Activated CD4-positive, alpha-beta T cell treated with anti-CD3 and anti-CD28 coated beads, Interleukin-2, amount 10 ng/mL, durations not matched to agents 24 days and 14 days (primary cell): ENCODE measurements at regions of chr2 and their contacts with region 1.

Region 1: GRCh38 chr2:12293874-12294273 is 422.9 kb upstream of the TRIB2 start:
- DNase-seq: peak; percentile 80
- H3K4me3 Mint-ChIP-seq: peak overlapping the region; percentile 34
- H3K27ac Mint-ChIP-seq: peak overlapping the region; percentile 82
- H3K4me1 Mint-ChIP-seq: peaks cover 46% of the 10 kb centered on the region
- H3K27me3 Mint-ChIP-seq: peaks cover 10% of the 10 kb centered on the region

Region 2: DNA sequence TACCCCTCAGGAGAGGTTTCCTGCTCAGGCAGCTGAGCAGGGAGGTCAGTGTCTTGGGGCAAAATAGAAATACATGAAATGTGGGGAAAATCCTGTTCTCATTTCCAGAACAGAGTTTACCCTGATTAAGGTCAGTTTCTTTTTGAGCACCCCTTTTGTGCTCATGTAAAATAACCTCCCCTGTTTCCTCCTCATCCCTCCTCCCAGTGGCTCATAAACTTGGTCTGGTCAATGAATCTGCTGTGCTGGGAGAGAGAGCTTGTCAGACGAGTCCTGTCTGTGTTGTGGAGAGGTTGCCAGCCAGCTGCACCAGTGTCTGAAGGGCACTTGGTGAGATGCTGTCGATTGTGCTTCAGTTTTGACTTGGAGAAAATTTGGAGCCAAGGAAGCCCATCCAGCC is 672.5 kb before region 1 on chr2:
- intact Hi-C with region 1: no loop called
- DNase-seq: no peak
- H3K4me3 Mint-ChIP-seq: no peak overlapping the region
- H3K27ac Mint-ChIP-seq: no peak overlapping the region
- H3K4me1 Mint-ChIP-seq: no peaks in the 10 kb centered on the region
- H3K27me3 Mint-ChIP-seq: no peaks in the 10 kb centered on the region

Region 3: DNA sequence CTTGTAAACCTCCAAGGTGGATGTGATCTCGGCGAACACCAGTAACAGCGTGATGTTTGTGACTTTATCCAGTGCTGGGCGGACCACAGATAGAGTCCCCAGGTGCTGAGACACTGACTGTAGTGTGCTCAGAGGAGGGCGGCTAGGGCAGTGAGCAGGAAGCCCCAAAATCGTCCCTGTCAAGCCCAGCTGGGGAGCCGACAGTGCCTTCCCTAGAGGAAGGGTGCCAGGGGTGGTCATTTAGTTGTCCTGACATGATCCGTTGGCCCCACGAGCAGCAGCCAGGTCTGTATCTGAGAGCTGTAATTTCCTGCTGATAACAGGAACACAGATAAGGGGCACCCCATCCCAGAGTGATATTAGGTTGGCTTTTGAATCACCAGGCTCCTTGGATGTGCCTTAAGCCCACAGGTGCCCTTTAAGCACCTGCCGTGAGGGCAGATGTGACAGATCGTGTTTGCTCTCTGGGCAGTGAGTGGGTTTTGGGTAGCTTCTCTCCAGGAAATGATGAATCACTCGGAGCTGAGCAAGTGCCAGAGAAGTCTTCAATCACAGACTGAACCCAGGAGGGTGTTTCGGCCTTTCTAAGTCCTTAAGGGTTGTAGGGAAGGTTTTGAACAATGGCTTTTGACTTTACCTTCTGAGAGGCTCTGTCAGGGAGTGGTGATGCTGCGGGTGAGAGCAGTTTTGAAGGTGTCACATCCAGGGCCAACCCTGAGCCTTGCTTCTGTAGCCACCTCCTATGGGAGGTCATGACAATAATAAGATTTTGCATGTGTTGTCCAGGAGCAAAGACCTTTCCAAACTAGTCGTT is 539.8 kb before region 1 on chr2:
- intact Hi-C with region 1: loop called (anchors 10 kb)
- DNase-seq: peak; percentile 87
- H3K4me3 Mint-ChIP-seq: peak overlapping the region; percentile 80
- H3K27ac Mint-ChIP-seq: peak overlapping the region; percentile 89
- H3K4me1 Mint-ChIP-seq: peaks cover 71% of the 10 kb centered on the region
- H3K27me3 Mint-ChIP-seq: no peaks in the 10 kb centered on the region

Region 4: DNA sequence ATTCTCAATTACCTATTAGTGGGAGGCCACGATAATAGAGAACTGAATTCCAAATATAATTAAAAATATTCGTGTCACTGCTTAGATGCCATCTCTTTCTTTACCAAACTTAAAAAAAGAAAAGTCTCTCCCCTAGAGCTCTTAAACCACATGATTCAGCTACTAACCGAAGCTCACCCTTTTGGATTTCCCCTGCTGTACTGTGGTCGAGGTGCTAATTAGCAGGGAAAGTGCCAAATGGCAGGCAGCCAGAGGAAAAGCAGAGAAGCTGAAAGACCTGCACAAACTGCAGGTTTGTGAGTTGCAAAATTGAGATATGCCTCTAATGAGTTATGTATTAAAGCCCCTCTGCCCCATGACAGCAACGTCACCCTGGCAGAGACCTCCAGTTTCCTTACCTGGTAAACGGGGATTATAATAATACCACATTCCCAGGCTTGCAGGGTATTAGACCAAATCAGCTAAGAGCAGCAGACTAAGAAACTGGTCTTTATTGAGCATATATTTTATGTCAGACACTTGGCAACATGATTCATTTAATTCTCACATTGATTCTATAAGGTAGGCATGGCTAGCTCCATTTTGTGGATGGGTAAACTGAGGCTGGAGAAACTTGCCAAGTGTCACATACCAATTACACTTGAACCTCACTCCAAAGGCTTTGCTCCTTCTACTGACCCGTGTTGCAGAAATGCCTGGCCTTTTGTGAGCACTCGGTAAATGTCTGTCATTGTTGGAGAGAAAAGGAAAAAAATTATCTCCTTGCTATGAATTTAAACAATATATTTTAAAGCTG is 287.8 kb before region 1 on chr2:
- intact Hi-C with region 1: loop called (anchors 5 kb)
- DNase-seq: peak; percentile 86
- H3K4me3 Mint-ChIP-seq: no peak overlapping the region
- H3K27ac Mint-ChIP-seq: no peak overlapping the region
- H3K4me1 Mint-ChIP-seq: peaks cover 8% of the 10 kb centered on the region
- H3K27me3 Mint-ChIP-seq: peaks cover 63% of the 10 kb centered on the region

Region 5: DNA sequence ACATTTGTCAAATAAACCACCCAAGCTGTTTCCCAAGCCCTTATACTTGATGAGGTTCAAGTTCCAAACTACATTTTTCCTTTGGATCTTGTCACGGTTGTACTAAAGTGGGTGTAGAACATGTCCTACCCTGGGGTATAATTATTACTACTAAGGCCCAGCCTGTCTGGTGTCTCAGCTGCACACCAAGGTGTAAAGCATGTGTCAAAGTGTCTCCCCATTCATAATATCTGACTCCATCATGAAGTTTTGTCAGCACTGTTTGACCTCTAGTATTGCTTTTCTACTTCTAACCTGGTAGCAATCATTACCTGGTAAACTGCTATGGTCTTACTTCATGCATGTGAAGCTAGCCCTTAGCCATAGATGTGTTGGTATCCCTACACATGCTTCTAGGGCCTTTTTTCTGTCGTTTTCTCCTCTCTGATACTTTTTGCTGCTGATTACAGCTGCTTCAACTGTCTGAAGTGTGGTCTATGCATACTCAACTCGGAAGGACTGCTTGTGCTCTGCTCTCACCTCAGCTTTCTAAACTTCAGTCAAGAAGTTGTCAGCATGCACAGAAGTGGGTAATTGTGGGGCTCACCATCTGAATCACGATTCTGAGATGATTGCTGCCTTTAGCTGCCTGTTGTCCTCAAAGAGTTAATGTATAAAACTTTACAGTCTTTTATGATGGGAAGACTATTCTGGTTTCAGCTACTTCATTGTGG is 22.8 kb before region 1 on chr2:
- intact Hi-C with region 1: loop called (anchors 1 kb)
- DNase-seq: peak; percentile 63
- H3K4me3 Mint-ChIP-seq: peak overlapping the region; percentile 7
- H3K27ac Mint-ChIP-seq: no peak overlapping the region
- H3K4me1 Mint-ChIP-seq: peaks cover 11% of the 10 kb centered on the region
- H3K27me3 Mint-ChIP-seq: peaks cover 5% of the 10 kb centered on the region

Region 6: DNA sequence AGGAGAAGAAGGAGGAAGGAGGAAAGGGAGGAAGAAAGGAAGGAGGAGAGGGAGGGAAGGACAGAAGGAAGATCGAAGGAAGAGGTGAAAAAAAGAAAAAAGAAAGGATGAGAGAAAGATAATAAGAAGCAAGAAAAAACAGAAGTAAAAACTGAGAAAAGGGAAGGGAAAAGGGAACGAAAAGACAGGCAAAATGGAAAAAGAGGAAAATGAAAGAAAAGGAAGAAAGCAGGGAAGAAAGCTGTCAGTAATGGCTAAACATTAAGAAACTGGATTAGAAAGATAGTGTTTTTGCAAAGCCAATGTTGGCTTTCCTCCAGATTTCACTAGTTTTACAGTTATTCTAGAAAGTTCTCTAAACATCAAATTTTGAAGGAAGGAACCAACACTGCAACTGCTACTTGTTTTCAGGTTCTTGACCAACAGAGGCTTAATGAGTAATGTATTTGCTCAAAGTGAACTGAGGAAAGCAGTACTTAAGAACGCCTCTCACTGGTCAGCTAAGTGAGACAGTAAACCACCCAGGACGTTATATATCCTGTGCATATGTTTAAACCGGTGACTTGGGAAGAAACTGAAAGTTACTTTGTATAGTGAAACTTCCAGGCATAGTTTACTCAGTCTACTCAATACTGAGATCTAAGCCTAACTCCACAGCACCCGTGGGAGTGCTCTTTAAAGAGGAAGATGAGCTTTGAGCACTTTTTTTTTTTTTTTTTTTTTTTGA is 136.7 kb after region 1 on chr2:
- intact Hi-C with region 1: loop called (anchors 1 kb)
- DNase-seq: peak; percentile 75
- H3K4me3 Mint-ChIP-seq: peak overlapping the region; percentile 50
- H3K27ac Mint-ChIP-seq: peak overlapping the region; percentile 38
- H3K4me1 Mint-ChIP-seq: peaks cover 23% of the 10 kb centered on the region
- H3K27me3 Mint-ChIP-seq: no peaks in the 10 kb centered on the region

Region 7: DNA sequence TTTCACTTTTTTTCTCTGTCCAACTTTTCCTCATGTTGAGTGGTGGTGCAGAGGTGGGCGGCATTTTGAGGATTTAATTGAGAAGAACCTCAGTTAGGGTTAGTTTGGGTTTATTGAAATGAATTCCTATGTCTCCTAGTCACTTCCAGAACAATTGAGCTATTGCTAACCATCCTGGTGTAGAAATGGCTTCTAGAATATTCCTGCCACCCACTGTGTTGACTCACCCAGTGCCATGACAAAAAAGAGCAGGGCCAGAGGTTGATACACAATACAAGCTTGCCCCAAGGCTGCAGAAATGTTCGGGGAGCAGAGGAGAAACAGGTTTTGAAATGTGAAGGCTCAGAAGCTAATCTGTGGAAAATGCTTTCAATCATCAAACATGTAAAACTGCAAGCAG is 255.8 kb after region 1 on chr2:
- intact Hi-C with region 1: loop called (anchors 1 kb)
- DNase-seq: no peak
- H3K4me3 Mint-ChIP-seq: no peak overlapping the region
- H3K27ac Mint-ChIP-seq: no peak overlapping the region
- H3K4me1 Mint-ChIP-seq: peaks cover 11% of the 10 kb centered on the region
- H3K27me3 Mint-ChIP-seq: peaks cover 2% of the 10 kb centered on the region

Region 8: DNA sequence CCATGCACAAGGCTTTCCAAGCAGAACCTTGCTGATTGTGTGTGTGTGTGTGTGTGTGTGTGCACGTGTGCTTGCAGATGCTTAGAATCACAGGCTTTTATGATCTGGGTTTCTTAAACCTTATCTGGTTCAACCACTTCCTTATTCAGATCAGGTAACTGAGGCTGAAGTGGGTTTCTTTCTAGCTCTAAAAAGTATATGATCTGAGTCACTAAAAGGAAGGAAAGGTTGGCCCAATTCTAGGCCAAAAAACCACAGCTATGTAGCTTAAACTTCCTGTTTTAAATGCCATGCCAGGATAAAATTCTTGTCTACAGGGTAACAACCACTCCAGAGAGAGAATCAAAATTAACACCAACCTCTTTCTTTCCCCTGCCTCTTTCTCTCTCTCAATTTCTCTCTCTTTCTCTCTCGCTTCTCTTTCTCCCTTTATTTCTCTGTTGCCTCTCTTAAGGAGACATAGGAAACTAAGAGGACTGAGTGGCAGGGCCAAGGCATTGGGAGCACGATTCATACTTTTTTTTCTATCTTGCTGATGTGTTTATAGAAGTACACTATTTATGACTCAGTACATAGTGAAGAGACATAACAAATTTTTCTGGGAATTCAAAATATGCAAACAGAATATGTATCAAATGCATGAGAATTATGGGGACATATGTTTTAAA is 563.2 kb after region 1 on chr2:
- intact Hi-C with region 1: loop called (anchors 5 kb)
- DNase-seq: peak; percentile 79
- H3K4me3 Mint-ChIP-seq: no peak overlapping the region
- H3K27ac Mint-ChIP-seq: no peak overlapping the region
- H3K4me1 Mint-ChIP-seq: peaks cover 27% of the 10 kb centered on the region
- H3K27me3 Mint-ChIP-seq: peaks cover 9% of the 10 kb centered on the region